Gastrocnemius medialis (tissue), 4 donors: ENCODE measurements at regions of chr9 and their contacts with region 1.

Region 1: GRCh38 chr9:90921111-90921510 is 119.5 kb downstream of the SYK start:
- DNase-seq: peak; percentile 95 to 99
- ATAC-seq: peak; percentile 77 to 82
- H3K4me3 ChIP-seq: no peak overlapping the region
- H3K27ac ChIP-seq: peak overlapping the region; percentile 81 to 93 (median 92)
- H3K4me1 ChIP-seq: peaks cover 21 to 25% of the 10 kb centered on the region in 2 donors
- H3K27me3 ChIP-seq: no peaks in the 10 kb centered on the region
- CTCF ChIP-seq: peak in 1 of 5 experiments; percentile 19
- POLR2A ChIP-seq: peak in 1 of 2 donors; percentile 46

Region 2: GRCh38 chr9:89388084-89388867 is 1532.8 kb before region 1 on chr9:
- in situ Hi-C with region 1: no loop called
- intact Hi-C with region 1: loop called (anchors 5 kb)
- DNase-seq: peak; percentile 85 to 94
- ATAC-seq: peak; percentile 83 to 87
- H3K4me3 ChIP-seq: no peak overlapping the region
- H3K27ac ChIP-seq: peak overlapping the region; percentile 79 to 93 (median 88)
- H3K4me1 ChIP-seq: peaks cover 20 to 26% of the 10 kb centered on the region in 2 donors
- H3K27me3 ChIP-seq: no peaks in the 10 kb centered on the region
- CTCF ChIP-seq: peak in 2 of 5 experiments; percentile 10 to 38
- POLR2A ChIP-seq: peak in 1 of 2 donors; percentile 19

Region 3: DNA sequence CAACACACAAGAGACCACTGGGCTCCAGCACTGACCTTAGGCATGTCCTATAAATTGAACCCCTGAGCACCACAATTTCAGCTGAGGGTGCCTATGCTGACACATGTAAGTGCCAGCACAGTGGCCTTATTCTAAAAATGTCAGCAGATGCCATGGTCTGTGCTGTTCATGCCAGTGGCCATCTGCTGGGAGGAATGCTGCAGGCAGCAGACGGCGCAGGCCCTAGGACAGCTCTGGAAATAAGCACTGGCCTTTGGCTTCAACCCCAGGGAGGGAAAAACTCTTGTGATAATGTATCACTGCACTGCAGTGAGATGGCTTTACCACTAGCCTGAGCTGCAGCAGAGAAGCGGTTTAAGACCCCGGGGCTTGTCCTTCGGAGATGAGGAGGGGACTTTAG is 21.0 kb before region 1 on chr9:
- in situ Hi-C with region 1: no loop called
- intact Hi-C with region 1: no loop called
- DNase-seq: peak in 1 of 2 donors; percentile 47
- ATAC-seq: peak; percentile 77 to 85
- H3K4me3 ChIP-seq: no peak overlapping the region
- H3K27ac ChIP-seq: no peak overlapping the region
- H3K4me1 ChIP-seq: no peaks in the 10 kb centered on the region
- H3K27me3 ChIP-seq: no peaks in the 10 kb centered on the region
- CTCF ChIP-seq: peak in 3 of 5 experiments; percentile 30 to 49 (median 49)
- POLR2A ChIP-seq: no peak

Region 4: DNA sequence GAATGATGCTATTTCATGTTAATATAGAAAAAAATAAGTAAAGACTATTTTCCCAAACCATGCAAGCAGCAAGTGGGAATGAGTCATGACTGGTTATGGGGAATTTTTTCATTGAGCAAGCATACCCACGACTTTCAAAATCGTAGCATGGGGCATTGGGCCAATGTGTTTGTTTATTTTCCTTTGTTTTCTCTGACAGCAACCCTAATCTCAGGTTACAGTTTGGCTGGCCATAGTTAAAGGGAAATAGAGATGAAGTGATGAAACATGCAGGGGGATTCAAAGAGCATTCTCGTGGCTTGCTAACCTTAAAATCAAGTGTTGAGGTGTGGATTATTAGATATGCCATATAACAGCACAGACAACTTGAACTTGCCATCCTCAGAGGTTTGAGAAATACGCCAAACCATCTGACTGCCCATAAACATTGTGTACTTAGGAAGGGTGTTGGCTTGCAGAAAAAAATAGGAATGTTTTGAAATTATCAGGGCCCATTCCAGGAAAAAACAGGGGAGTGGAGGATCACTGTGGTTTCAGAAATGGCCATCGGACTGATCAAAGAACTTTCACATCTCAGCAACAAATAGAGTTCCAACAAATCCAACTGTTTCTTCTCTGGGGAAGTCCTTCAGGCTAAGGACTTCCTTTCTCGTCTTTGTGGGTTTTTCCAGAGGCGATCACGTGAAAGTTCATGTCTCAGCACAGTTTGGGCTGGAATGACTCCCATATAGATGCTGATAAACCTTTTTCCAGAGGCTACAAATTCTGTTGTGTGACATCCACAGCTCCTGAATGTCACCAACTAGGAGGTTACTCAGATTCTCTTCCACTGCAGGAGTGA is 139.6 kb after region 1 on chr9:
- in situ Hi-C with region 1: no loop called
- intact Hi-C with region 1: loop called (anchors 2 kb)
- DNase-seq: peak; percentile 70 to 81
- ATAC-seq: peak; percentile 71 to 73
- H3K4me3 ChIP-seq: no peak overlapping the region
- H3K27ac ChIP-seq: peak overlapping the region; percentile 82 to 87 (median 84)
- H3K4me1 ChIP-seq: peaks cover 42 to 43% of the 10 kb centered on the region in 2 donors
- H3K27me3 ChIP-seq: no peaks in the 10 kb centered on the region
- CTCF ChIP-seq: no peak
- POLR2A ChIP-seq: peak in 1 of 2 donors; percentile 12

Region 5: GRCh38 chr9:91101611-91102168 is 180.6 kb after region 1 on chr9:
- in situ Hi-C with region 1: no loop called
- intact Hi-C with region 1: loop called (anchors 1 kb)
- DNase-seq: peak in 1 of 2 donors; percentile 49
- ATAC-seq: no peak
- H3K4me3 ChIP-seq: no peak overlapping the region
- H3K27ac ChIP-seq: peak overlapping the region; percentile 81 to 89 (median 84)
- H3K4me1 ChIP-seq: peaks cover 23 to 35% of the 10 kb centered on the region in 2 donors
- H3K27me3 ChIP-seq: no peaks in the 10 kb centered on the region
- CTCF ChIP-seq: no peak
- POLR2A ChIP-seq: no peak

Region 6: GRCh38 chr9:91361291-91362050 is 440.4 kb after region 1 on chr9 and contains the start of gene AUH:
- in situ Hi-C with region 1: no loop called
- intact Hi-C with region 1: loop called (anchors 5 kb)
- DNase-seq: peak; percentile 69 to 81
- ATAC-seq: peak; percentile 93 to 94
- H3K4me3 ChIP-seq: peak within 1 kb of the TSS; percentile 76 to 97 (median 94)
- H3K27ac ChIP-seq: peak within 1 kb of the TSS; percentile 90 to 96 (median 93)
- H3K4me1 ChIP-seq: peaks cover 29 to 43% of the 10 kb centered on the region in 2 donors
- H3K27me3 ChIP-seq: no peaks in the 10 kb centered on the region
- CTCF ChIP-seq: peak in 1 of 5 experiments; percentile 29
- POLR2A ChIP-seq: peak; percentile 61 to 89
- total RNA-seq, gene AUH: 17.1 to 28.2 (median 20.8) TPM

Region 7: DNA sequence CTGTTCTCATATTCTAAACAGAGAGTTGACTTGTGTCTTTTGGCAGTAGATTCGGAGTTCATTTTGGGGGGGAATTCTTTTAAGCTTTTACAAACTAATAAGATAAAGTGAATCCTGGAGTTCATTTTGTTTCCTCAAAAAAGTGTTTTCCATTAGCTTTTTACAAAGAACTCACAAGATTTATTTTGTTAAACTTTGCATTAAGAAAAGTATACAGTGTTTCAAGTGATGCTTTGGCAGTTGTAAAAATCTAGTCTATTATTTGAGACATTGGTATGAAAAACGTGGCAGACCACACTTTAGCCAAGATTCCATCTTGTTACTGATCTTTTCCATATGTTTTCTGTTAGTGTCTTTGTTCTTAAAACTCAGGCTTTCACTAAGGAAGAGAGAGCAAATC is 1504.4 kb after region 1 on chr9:
- in situ Hi-C with region 1: no loop called
- intact Hi-C with region 1: no loop called
- DNase-seq: no peak
- ATAC-seq: no peak
- H3K4me3 ChIP-seq: no peak overlapping the region
- H3K27ac ChIP-seq: no peak overlapping the region
- H3K4me1 ChIP-seq: no peaks in the 10 kb centered on the region
- H3K27me3 ChIP-seq: no peaks in the 10 kb centered on the region
- CTCF ChIP-seq: no peak
- POLR2A ChIP-seq: no peak